Ascending aorta (tissue), 2 donors: ENCODE measurements at regions of chr16 and their contacts with region 1.

Region 1: DNA sequence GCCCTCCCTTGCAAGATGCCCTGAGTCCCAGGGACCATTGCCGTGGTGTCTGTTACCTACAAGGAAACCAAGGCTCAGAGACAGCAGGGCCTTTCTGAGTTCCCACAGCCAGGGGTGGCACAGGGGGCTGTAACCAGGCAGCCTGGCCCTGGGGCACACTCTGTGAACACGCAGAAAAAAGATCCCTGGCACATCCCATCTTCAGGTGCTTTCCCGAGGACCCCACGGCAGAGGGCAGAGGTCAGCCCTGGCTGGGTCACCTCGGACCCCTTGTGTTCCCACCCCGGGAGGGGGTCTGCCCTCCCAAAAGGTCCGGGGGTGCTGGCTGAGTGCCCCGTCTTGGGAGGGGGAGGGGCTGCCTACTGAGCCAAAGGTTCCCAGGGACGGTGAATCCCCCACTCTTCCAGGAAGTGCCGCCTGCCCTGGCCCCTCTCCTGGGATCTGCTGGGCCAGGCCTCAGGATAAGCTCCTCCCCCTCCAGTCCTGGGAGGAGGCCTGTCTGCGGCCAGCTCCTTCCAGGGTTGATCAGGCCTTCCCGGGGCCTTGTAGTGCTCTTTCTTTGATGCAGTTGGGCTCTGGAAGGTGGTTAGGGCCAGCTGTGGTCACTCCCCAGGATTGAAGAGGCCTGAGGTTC is 8.1 kb downstream of the GLIS2 start:
- DNase-seq: peak in 1 of 2 donors; percentile 85
- H3K4me3 ChIP-seq: peak overlapping the region in 1 of 2 donors; percentile 46
- H3K27ac ChIP-seq: peak overlapping the region; percentile 93 to 94
- H3K4me1 ChIP-seq: peaks cover 66 to 84% of the 10 kb centered on the region in 2 donors
- H3K27me3 ChIP-seq: no peaks in the 10 kb centered on the region
- CTCF ChIP-seq: no peak

Region 2: DNA sequence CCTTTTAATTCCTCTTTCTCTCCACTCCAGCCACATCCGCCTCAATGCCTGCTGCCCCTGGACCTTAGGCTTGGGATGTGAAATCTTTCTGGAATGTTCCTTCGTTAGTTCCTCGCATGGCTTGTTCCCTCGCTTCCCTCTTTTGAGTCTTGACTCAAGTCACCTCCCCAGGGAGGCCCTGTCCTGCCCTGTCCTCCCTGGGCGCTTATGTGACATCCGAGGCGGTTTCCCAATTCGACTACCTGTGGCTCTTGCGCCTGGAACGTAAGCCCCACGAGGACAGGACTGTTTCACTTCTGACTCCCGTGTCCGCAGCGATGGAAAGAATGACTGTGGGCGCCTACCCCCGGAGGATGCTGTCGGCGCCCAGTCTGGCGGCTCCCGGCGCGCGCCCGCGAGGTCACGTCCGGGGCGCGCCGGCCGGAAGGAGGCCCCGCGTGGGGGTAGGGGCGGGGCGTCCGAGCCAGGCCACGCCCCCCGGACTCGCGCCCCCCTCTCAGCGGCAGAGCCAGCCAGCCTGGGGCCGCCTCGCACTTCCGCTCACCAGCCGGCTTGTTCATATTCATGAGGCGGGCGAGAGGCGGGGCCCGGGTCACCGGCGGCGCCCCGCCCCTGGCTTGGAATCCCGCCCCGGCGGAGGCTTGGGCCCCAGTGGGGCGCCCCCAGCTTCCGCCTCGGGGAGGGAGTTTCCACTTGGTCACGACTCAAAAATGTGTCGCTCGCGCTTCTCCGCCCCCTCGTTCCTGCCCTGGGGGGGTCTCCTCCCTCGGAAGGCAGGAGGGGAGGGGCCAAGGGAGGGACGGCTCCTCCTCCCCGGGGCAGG is 16.5 kb before region 1 on chr16:
- intact Hi-C with region 1: loop called (anchors 2 kb)
- DNase-seq: peak; percentile 65 to 97
- H3K4me3 ChIP-seq: peak overlapping the region; percentile 53
- H3K27ac ChIP-seq: peak overlapping the region; percentile 77 to 85
- H3K4me1 ChIP-seq: peaks cover 0 to 7% of the 10 kb centered on the region in 2 donors
- H3K27me3 ChIP-seq: no peaks in the 10 kb centered on the region
- CTCF ChIP-seq: no peak

Region 3: GRCh38 chr16:4416200-4417032 is 92.5 kb after region 1 on chr16 and contains the start of gene CORO7:
- intact Hi-C with region 1: no loop called
- DNase-seq: peak; percentile 87 to 98
- H3K4me3 ChIP-seq: peak within 1 kb of the TSS; percentile 65 to 83
- H3K27ac ChIP-seq: peak within 1 kb of the TSS; percentile 49 to 67
- H3K4me1 ChIP-seq: peaks cover 0 to 9% of the 10 kb centered on the region in 2 donors
- H3K27me3 ChIP-seq: no peaks in the 10 kb centered on the region
- CTCF ChIP-seq: peak in 1 of 3 experiments; percentile 3
- total RNA-seq, gene CORO7: 41.9 TPM